CD14-positive monocyte (primary cell): ENCODE measurements at regions of chr19 and their contacts with region 1.

Region 1: GRCh38 chr19:1275260-1275975 is at the start of gene FAM174C:
- DNase-seq: peak; percentile 95 to 98 (median 97)
- H3K4me3 ChIP-seq: peak within 1 kb of the TSS; percentile 59 to 81 (median 71)
- H3K4me3 Mint-ChIP-seq: peak within 1 kb of the TSS; percentile 70 to 71
- H3K27ac ChIP-seq: peak within 1 kb of the TSS; percentile 85 to 89
- H3K27ac Mint-ChIP-seq: peak within 1 kb of the TSS; percentile 81 to 93 (median 90)
- H3K4me1 ChIP-seq: peaks cover 57 to 66% of the 10 kb centered on the region in 2 donors
- H3K4me1 Mint-ChIP-seq: peaks cover 55% of the 10 kb centered on the region
- H3K27me3 ChIP-seq: no peaks in the 10 kb centered on the region
- H3K27me3 Mint-ChIP-seq: no peaks in the 10 kb centered on the region
- CTCF ChIP-seq: no peak
- polyA plus RNA-seq, gene FAM174C: 32.8 to 56.2 (median 40.0) TPM

Region 2: DNA sequence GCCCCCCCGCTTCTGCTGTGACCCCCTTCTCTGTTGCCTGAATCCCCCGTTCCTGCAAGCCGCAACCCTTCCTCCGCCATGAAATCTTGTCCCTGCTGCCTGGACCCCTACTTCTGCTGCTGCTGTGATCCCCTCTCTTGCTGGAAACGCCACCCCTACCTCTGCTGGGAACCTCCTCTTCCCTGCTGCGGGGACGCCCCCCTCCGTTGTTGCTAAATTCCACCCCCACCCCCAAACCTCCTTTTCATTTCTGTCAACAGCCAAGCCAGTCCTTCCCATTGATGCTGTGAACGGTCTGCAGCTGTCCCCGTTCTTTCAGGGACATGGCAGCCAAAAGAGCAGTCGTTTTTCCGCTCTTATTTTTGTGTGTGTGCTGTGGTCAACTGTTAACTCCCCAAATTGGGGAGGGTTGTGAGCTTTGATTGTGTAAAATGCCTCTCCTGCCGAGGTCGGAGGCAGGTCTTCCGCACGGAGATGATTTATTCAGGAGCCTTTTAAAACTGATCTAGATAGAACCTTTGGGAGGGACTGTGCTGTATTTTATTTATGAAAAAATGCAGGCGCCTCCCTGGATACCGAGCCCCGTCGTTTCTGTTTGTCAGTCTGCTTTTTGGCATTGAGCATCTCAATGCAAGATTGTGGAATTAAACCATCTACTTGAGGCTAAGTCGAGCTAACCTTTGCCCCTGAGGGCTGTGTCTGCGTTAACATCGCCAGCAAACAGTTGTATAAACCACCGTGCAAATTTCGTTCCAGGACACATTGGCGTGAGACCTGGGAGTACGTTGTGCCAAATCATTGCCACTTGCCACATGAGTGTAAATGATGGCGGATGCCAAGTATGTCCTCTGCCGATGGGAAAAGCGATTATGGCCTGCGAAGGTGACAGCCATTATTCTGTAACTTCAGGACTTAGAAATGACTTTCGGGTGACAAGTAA is 80.4 kb after region 1 on chr19:
- intact Hi-C with region 1: loop called in 1 of 2 experiments (anchors 5 kb)
- DNase-seq: no peak
- H3K4me3 ChIP-seq: peak overlapping the region; percentile 56 to 96 (median 66)
- H3K4me3 Mint-ChIP-seq: peak overlapping the region; percentile 76 to 93
- H3K27ac ChIP-seq: no peak overlapping the region
- H3K27ac Mint-ChIP-seq: peak overlapping the region in 3 of 7 donors; percentile 72 to 85 (median 80)
- H3K4me1 ChIP-seq: peaks cover 14 to 24% of the 10 kb centered on the region in 2 donors
- H3K4me1 Mint-ChIP-seq: peaks cover 20% of the 10 kb centered on the region
- H3K27me3 ChIP-seq: peaks cover 0 to 5% of the 10 kb centered on the region in 2 donors
- H3K27me3 Mint-ChIP-seq: peaks cover 5 to 14% (median 8%) of the 10 kb centered on the region in 3 donors
- CTCF ChIP-seq: no peak

Region 3: DNA sequence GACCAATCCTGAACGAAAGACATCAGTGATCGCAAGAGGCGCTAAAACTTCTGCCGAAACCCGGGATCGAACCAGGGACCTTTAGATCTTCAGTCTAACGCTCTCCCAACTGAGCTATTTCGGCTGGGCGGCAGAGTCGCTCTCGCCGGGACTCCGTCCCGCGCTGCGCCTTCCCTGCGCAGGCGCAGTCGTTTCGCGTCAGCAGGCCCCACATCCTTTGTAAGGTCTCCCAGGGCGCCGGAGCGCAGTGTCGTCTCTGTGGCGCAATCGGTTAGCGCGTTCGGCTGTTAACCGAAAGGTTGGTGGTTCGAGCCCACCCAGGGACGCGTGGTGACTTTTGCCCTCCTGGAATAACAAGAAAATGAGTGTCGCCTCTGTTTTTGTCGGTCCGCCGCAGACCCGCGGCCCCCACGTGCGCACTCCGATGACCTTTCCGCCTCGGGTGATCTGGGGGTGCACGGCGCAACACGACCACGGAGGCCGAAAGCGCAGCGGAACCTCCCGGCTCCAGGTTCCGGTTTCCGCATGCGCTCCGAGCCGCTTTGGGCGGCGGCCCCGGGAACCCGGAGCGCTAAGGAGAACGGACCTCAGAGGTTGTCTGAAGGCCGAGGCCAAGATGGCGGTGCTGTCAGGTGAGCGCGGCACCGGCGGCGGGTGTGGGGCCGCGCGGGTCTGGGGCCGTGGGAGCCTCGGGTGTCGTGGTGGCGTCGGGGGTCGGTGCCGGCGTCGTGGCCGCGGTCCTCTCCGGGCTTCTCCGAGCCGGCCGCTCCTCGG is 108.1 kb after region 1 on chr19 and contains the start of gene NDUFS7:
- intact Hi-C with region 1: loop called (anchors 5 kb)
- DNase-seq: peak; percentile 88 to 95 (median 92)
- H3K4me3 ChIP-seq: peak within 1 kb of the TSS; percentile 83 to 96 (median 88)
- H3K4me3 Mint-ChIP-seq: peak within 1 kb of the TSS; percentile 82 to 88
- H3K27ac ChIP-seq: peak within 1 kb of the TSS; percentile 80 to 86
- H3K27ac Mint-ChIP-seq: peak within 1 kb of the TSS; percentile 89 to 97 (median 95)
- H3K4me1 ChIP-seq: peaks cover 12 to 14% of the 10 kb centered on the region in 2 donors
- H3K4me1 Mint-ChIP-seq: peaks cover 20% of the 10 kb centered on the region
- H3K27me3 ChIP-seq: no peaks in the 10 kb centered on the region
- H3K27me3 Mint-ChIP-seq: peaks cover 1 to 15% (median 9%) of the 10 kb centered on the region in 3 donors
- CTCF ChIP-seq: no peak
- polyA plus RNA-seq, gene NDUFS7: 119 to 232 (median 211) TPM